ENCODE measurements at regions of chr10 and their contacts with region 1.

Region 1: GRCh38 chr10:71270301-71271220 is 48.5 kb upstream of the SLC29A3 start:
- DNase-seq: peak; percentile 47 to 75
- H3K4me3 ChIP-seq: peak overlapping the region in 1 of 4 experiments; percentile 18; a peak in 1 of 8 replicates
- H3K27ac ChIP-seq: no peak overlapping the region; the same call in 1 of the 2 replicates
- H3K4me1 ChIP-seq: peaks cover 5 to 41% (median 30%) of the 10 kb centered on the region in 4 experiments
- H3K27me3 ChIP-seq: no peaks in the 10 kb centered on the region
- CTCF ChIP-seq: peak; percentile 46 to 68 (median 66)
- EP300 ChIP-seq: no peak
- POLR2A ChIP-seq: no peak
- RAD21 ChIP-seq: peak; percentile 49 to 66

Region 2: GRCh38 chr10:71205468-71205867 is 65.1 kb before region 1 on chr10:
- CTCF ChIA-PET with region 1: interaction called, 16 read pairs
- POLR2A ChIA-PET with region 1: interaction called, 3 read pairs
- DNase-seq: no peak
- H3K4me3 ChIP-seq: no peak overlapping the region
- H3K27ac ChIP-seq: no peak overlapping the region
- H3K4me1 ChIP-seq: peaks cover 0 to 9% (median 4%) of the 10 kb centered on the region in 4 experiments; a peak in 5 of 7 replicates
- H3K27me3 ChIP-seq: peaks cover 1 to 11% (median 7%) of the 10 kb centered on the region in 4 experiments
- CTCF ChIP-seq: no peak
- EP300 ChIP-seq: no peak
- POLR2A ChIP-seq: no peak
- RAD21 ChIP-seq: no peak

Region 3: DNA sequence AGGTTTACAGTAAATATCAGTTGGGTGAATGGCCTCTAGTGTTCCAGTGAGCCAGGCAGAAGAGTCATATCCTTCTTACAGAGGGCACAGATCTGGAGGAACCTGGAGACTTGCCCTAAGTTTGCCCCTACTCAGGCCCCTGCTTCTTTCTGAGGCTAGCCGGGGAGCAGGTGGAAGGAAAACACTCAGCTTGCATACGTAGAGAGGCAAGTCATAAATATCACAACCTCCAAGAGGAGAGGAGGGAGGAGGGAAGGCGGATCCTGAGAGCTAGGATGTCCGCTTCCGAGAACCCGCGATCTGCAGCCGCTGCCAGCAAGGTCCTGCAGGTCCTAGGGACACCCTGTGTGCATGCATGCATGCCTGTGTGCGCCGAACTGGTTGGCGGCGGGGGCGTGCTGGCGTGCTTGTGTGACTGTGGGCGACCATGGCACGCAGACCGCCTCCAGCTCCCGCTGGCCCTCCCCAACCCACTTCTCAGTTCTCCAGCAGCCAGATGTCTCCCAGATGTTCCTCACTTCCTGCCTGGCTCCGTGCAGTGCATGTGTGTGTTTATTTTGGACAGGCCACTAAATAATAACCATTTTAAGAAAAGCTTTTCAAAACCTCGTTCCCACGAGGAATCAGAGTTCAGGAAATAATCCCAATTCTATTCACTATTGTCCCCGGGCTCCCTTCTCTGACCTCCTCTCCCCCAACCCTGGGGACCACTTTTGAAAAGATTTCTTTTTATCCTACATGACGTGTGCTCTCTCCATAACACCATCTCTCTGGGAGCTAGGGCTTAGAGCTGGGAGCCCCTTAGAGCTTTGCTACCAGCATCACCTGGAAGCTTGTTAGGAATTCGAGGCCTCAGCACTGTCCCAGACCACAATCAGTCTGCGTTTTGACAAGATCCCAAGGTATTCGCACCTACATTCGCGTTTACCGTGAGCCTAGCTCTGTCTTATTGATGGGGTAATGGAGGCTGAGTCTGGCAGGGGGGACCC is 25.8 kb before region 1 on chr10:
- CTCF ChIA-PET with region 1: interaction called, 72 read pairs
- POLR2A ChIA-PET with region 1: no interaction called
- DNase-seq: no peak
- H3K4me3 ChIP-seq: no peak overlapping the region
- H3K27ac ChIP-seq: no peak overlapping the region
- H3K4me1 ChIP-seq: peaks cover 0 to 1% (median 0%) of the 10 kb centered on the region in 4 experiments; a peak in 2 of 7 replicates
- H3K27me3 ChIP-seq: no peaks in the 10 kb centered on the region; a peak in 1 of 7 replicates
- CTCF ChIP-seq: no peak
- EP300 ChIP-seq: no peak
- POLR2A ChIP-seq: no peak
- RAD21 ChIP-seq: no peak

Region 4: GRCh38 chr10:71255808-71256660 is 14.5 kb before region 1 on chr10:
- CTCF ChIA-PET with region 1: interaction called, 37 read pairs
- POLR2A ChIA-PET with region 1: interaction called, 6 read pairs
- DNase-seq: no peak
- H3K4me3 ChIP-seq: no peak overlapping the region
- H3K27ac ChIP-seq: no peak overlapping the region
- H3K4me1 ChIP-seq: peaks cover 17 to 41% (median 33%) of the 10 kb centered on the region in 4 experiments
- H3K27me3 ChIP-seq: no peaks in the 10 kb centered on the region
- CTCF ChIP-seq: no peak
- EP300 ChIP-seq: no peak
- POLR2A ChIP-seq: no peak
- RAD21 ChIP-seq: no peak

Region 5: DNA sequence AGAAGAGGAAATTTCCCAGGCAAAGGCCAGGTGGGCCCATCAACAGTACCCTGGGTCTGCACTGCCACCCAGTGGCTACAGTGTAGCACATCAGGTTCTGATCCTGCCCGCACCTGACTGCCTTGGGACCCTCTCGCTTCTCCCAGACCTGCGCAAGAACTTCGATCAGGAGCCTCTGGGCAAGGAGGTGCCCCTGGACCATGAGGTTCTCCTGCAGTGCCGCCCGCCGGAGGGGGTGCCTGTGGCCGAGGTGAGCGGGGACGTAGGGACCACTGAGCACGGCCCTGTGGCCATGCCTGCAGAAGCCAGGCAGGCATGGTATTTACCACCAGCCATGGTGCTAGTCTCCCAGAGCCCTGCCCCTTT is 14.6 kb after region 1 on chr10:
- CTCF ChIA-PET with region 1: interaction called, 175 read pairs
- POLR2A ChIA-PET with region 1: interaction called, 13 read pairs
- DNase-seq: peak in 1 of 2 experiments; percentile 85
- H3K4me3 ChIP-seq: no peak overlapping the region
- H3K27ac ChIP-seq: no peak overlapping the region
- H3K4me1 ChIP-seq: no peaks in the 10 kb centered on the region
- H3K27me3 ChIP-seq: no peaks in the 10 kb centered on the region
- CTCF ChIP-seq: peak; percentile 80 to 85 (median 85)
- EP300 ChIP-seq: no peak
- POLR2A ChIP-seq: no peak
- RAD21 ChIP-seq: peak; percentile 91

Region 6: GRCh38 chr10:71302874-71303568 is 32.5 kb after region 1 on chr10:
- CTCF ChIA-PET with region 1: no interaction called
- POLR2A ChIA-PET with region 1: no interaction called
- DNase-seq: no peak
- H3K4me3 ChIP-seq: no peak overlapping the region
- H3K27ac ChIP-seq: no peak overlapping the region
- H3K4me1 ChIP-seq: peaks cover 0 to 4% (median 0%) of the 10 kb centered on the region in 4 experiments; a peak in 3 of 7 replicates
- H3K27me3 ChIP-seq: no peaks in the 10 kb centered on the region
- CTCF ChIP-seq: peak in 2 of 3 experiments; percentile 31 to 60; a peak in 3 of 4 replicates
- EP300 ChIP-seq: no peak
- POLR2A ChIP-seq: no peak
- RAD21 ChIP-seq: peak; percentile 45 to 50